Ascending aorta (tissue), 2 donors: ENCODE measurements at regions of chr18 and their contacts with region 1.

Region 1: DNA sequence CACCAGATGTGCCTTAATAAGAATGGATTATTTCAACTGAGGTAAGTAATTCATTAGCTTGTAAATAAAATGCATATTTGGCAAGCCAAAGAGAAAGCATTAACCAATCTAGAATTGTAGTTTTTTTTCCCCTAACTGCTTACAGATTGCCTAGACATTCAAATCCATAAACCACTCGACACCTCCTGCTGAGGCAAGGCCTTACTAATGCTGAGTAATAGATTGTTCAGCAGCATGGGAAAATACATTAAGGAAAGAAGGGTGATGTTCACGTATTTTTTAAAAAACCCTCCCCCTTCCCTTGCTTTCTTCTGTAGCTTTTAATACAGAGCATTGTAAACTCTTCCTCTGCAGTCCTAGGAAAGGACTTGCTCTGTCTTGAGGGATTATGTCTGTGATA is 17.0 kb upstream of the LINC00305 start:
- DNase-seq: no peak
- H3K4me3 ChIP-seq: no peak overlapping the region
- H3K27ac ChIP-seq: no peak overlapping the region
- H3K4me1 ChIP-seq: no peaks in the 10 kb centered on the region
- H3K27me3 ChIP-seq: no peaks in the 10 kb centered on the region
- CTCF ChIP-seq: no peak

Region 2: GRCh38 chr18:64017870-64018269 is 148.0 kb before region 1 on chr18:
- intact Hi-C with region 1: no loop called
- DNase-seq: no peak
- H3K4me3 ChIP-seq: no peak overlapping the region
- H3K27ac ChIP-seq: no peak overlapping the region
- H3K4me1 ChIP-seq: no peaks in the 10 kb centered on the region
- H3K27me3 ChIP-seq: no peaks in the 10 kb centered on the region
- CTCF ChIP-seq: peak in 1 of 3 experiments; percentile 21

Region 3: GRCh38 chr18:64488698-64489097 is 322.8 kb after region 1 on chr18:
- intact Hi-C with region 1: no loop called
- DNase-seq: no peak
- H3K4me3 ChIP-seq: no peak overlapping the region
- H3K27ac ChIP-seq: no peak overlapping the region
- H3K4me1 ChIP-seq: no peaks in the 10 kb centered on the region
- H3K27me3 ChIP-seq: no peaks in the 10 kb centered on the region
- CTCF ChIP-seq: no peak

Region 4: GRCh38 chr18:64982414-64983055 is 816.6 kb after region 1 on chr18:
- intact Hi-C with region 1: loop called (anchors 10 kb)
- DNase-seq: no peak
- H3K4me3 ChIP-seq: no peak overlapping the region
- H3K27ac ChIP-seq: no peak overlapping the region
- H3K4me1 ChIP-seq: no peaks in the 10 kb centered on the region
- H3K27me3 ChIP-seq: no peaks in the 10 kb centered on the region
- CTCF ChIP-seq: no peak